Endothelial cell of umbilical vein (primary cell): ENCODE measurements at regions of chr4 and their contacts with region 1.

Region 1: GRCh38 chr4:21469438-21470300 is 478.9 kb downstream of the KCNIP4 start:
- DNase-seq: peak; percentile 40
- H3K4me3 ChIP-seq: no peak overlapping the region
- H3K27ac ChIP-seq: no peak overlapping the region
- H3K4me1 ChIP-seq: peaks cover 5% of the 10 kb centered on the region
- H3K27me3 ChIP-seq: peaks cover 6 to 9% of the 10 kb centered on the region in 2 experiments
- CTCF ChIP-seq: peak; percentile 25 to 54
- POLR2A ChIP-seq: no peak

Region 2: GRCh38 chr4:21113496-21114223 is 356.0 kb before region 1 on chr4:
- CTCF ChIA-PET with region 1: no interaction called
- POLR2A ChIA-PET with region 1: no interaction called
- dilution Hi-C with region 1: no loop called
- intact Hi-C with region 1: no loop called
- DNase-seq: peak; percentile 84
- H3K4me3 ChIP-seq: no peak overlapping the region
- H3K27ac ChIP-seq: peak overlapping the region; percentile 94
- H3K4me1 ChIP-seq: peaks cover 22% of the 10 kb centered on the region
- H3K27me3 ChIP-seq: no peaks in the 10 kb centered on the region
- CTCF ChIP-seq: no peak
- POLR2A ChIP-seq: no peak

Region 3: DNA sequence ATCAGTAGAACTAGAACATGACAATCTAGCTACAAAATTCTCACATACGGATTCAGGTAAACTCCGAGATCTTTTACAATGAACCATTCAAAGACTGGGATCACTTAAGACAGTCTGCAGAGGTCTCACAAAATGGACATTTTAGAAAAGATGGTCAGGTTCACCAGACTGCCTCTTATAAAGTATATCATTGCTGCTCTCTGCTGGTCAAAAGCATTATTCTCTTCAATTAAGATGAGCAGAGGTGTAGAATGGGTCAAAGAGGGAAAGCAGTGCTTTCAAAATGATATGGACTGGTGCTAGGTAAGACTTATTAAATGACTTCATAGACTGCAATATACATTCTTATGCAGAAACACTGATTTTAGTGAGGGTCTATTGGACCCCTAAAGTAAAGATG is 334.7 kb before region 1 on chr4:
- CTCF ChIA-PET with region 1: interaction called, 6 read pairs
- POLR2A ChIA-PET with region 1: no interaction called
- dilution Hi-C with region 1: no loop called
- intact Hi-C with region 1: loop called (anchors 10 kb)
- DNase-seq: peak; percentile 62
- H3K4me3 ChIP-seq: no peak overlapping the region
- H3K27ac ChIP-seq: no peak overlapping the region
- H3K4me1 ChIP-seq: peaks cover 18% of the 10 kb centered on the region
- H3K27me3 ChIP-seq: no peaks in the 10 kb centered on the region
- CTCF ChIP-seq: peak; percentile 29 to 30
- POLR2A ChIP-seq: no peak

Region 4: DNA sequence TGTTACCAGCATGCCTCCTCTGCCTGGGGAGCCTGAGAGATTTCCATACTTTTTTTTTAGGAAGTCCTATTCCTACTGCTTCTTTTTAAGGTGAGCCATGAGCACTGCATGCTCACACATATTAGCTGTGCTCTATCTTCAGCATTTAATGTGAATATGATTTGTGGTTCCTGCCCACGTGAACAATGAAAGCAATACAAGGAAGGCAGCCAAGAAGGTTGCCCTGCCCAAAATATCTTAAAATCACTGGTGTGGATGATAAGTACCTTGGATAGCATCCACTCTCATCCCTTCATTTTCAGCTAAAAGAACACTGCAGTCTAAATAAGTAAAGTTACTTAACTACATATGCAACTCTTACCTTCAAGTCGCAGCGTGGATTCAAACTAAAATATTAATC is 162.0 kb before region 1 on chr4:
- CTCF ChIA-PET with region 1: no interaction called
- POLR2A ChIA-PET with region 1: no interaction called
- dilution Hi-C with region 1: no loop called
- intact Hi-C with region 1: no loop called
- DNase-seq: no peak
- H3K4me3 ChIP-seq: no peak overlapping the region
- H3K27ac ChIP-seq: no peak overlapping the region
- H3K4me1 ChIP-seq: no peaks in the 10 kb centered on the region
- H3K27me3 ChIP-seq: peaks cover 16 to 29% of the 10 kb centered on the region in 2 experiments
- CTCF ChIP-seq: no peak
- POLR2A ChIP-seq: no peak

Region 5: DNA sequence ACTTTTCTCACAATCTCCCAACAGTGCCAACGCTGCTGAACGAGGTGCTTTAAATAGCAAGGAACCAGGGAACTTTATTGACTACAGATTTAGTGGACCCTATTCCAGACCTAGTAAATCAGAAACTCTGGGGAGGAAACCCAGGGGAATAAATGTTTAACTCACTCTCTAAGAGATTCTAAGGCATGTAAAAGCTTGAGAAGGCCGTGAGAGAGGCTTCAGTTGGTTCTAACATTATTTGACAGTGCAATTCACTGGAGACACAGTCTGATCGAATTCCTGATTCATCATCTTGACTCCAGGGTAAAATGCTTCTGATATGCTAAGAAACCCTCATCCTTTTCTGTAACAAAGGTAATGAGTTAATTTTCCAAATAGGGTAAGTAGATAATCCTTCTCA is 15.5 kb before region 1 on chr4:
- CTCF ChIA-PET with region 1: interaction called, 10 read pairs
- POLR2A ChIA-PET with region 1: no interaction called
- dilution Hi-C with region 1: no loop called
- intact Hi-C with region 1: no loop called
- DNase-seq: no peak
- H3K4me3 ChIP-seq: no peak overlapping the region
- H3K27ac ChIP-seq: no peak overlapping the region
- H3K4me1 ChIP-seq: no peaks in the 10 kb centered on the region
- H3K27me3 ChIP-seq: peaks cover 0 to 3% of the 10 kb centered on the region in 2 experiments
- CTCF ChIP-seq: no peak
- POLR2A ChIP-seq: no peak

Region 6: GRCh38 chr4:21490682-21491081 is 21.0 kb after region 1 on chr4:
- CTCF ChIA-PET with region 1: interaction called, 11 read pairs
- POLR2A ChIA-PET with region 1: no interaction called
- dilution Hi-C with region 1: no loop called
- intact Hi-C with region 1: no loop called
- DNase-seq: no peak
- H3K4me3 ChIP-seq: no peak overlapping the region
- H3K27ac ChIP-seq: no peak overlapping the region
- H3K4me1 ChIP-seq: no peaks in the 10 kb centered on the region
- H3K27me3 ChIP-seq: peaks cover 0 to 4% of the 10 kb centered on the region in 2 experiments
- CTCF ChIP-seq: no peak
- POLR2A ChIP-seq: no peak